Posterior cingulate gyrus (tissue), 11 donors: ENCODE measurements at regions of chr4 and their contacts with region 1.

Region 1: GRCh38 chr4:85798012-85798770 is 323.2 kb downstream of the ARHGAP24 start:
- DNase-seq: no peak

Region 2: DNA sequence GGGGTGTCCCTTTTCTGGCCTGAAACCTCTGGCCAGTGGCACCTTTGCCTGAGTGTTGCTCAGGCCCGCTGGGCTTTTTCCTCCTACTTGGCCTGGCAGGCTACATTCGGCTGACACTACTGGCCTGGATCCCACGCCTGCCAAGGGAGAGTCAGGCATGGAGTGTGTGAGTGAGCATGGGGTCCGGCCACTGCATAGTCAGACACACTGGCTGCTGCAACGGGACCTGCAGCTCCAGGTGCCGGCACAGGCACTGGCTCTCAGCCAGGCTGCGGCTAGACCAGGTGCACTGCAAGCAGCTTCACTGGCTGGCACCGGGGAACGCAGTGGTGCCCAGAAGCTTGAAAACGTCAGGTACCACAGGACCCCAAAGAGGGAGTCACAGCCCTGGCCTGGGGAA is 111.7 kb after region 1 on chr4:
- intact Hi-C with region 1: no loop called
- DNase-seq: peak in 5 of 10 donors; percentile 7 to 75 (median 54)

Region 3: GRCh38 chr4:85968945-85969819 is 171.0 kb after region 1 on chr4:
- intact Hi-C with region 1: loop called (anchors 2 kb)
- DNase-seq: no peak

Region 4: GRCh38 chr4:86043755-86044592 is 245.8 kb after region 1 on chr4:
- intact Hi-C with region 1: loop called (anchors 5 kb)
- DNase-seq: peak in 1 of 10 donors; percentile 21